CD4-positive, alpha-beta T cell (primary cell): ENCODE measurements at regions of chr12 and their contacts with region 1.

Region 1: DNA sequence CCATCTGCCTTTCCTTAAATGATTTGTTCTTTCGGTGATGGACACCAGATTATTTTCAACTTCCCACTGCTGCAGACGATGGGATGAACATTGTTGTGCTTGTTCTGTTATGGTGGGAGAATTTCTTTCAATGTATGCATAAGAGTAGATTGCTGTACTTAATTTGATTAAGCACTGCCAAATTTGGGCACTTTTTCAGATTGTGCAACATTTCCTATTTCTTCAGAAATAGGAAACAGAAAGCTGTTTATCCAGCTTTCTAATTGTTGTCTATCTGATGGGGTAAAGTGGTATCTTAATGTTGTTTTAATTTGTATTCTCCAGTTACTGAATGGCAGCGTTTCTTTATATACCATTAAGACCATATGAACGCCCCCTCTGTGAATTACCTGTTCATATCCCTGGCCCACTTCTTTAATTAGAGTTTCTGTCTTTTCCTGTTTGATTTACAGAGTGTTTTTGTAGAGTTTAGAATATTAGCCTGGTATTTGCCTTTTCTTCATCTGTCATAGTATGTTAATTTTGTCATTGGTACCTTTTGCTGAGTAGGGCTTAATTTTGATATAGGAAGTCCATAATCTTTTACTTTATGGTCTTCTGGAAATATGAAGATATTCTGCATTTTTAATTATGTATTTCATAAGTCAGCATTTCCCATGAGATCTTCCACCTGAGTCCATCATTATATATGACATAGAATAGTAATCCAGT is 59.6 kb downstream of the DIP2B start:
- DNase-seq: no peak
- ATAC-seq: no peak
- H3K4me3 ChIP-seq: no peak overlapping the region
- H3K4me3 Mint-ChIP-seq: no peak overlapping the region
- H3K27ac ChIP-seq: no peak overlapping the region
- H3K27ac Mint-ChIP-seq: peak overlapping the region; percentile 5
- H3K4me1 ChIP-seq: peaks cover 6% of the 10 kb centered on the region
- H3K4me1 Mint-ChIP-seq: peaks cover 75% of the 10 kb centered on the region
- H3K27me3 ChIP-seq: no peaks in the 10 kb centered on the region
- H3K27me3 Mint-ChIP-seq: no peaks in the 10 kb centered on the region
- CTCF ChIP-seq: no peak

Region 2: DNA sequence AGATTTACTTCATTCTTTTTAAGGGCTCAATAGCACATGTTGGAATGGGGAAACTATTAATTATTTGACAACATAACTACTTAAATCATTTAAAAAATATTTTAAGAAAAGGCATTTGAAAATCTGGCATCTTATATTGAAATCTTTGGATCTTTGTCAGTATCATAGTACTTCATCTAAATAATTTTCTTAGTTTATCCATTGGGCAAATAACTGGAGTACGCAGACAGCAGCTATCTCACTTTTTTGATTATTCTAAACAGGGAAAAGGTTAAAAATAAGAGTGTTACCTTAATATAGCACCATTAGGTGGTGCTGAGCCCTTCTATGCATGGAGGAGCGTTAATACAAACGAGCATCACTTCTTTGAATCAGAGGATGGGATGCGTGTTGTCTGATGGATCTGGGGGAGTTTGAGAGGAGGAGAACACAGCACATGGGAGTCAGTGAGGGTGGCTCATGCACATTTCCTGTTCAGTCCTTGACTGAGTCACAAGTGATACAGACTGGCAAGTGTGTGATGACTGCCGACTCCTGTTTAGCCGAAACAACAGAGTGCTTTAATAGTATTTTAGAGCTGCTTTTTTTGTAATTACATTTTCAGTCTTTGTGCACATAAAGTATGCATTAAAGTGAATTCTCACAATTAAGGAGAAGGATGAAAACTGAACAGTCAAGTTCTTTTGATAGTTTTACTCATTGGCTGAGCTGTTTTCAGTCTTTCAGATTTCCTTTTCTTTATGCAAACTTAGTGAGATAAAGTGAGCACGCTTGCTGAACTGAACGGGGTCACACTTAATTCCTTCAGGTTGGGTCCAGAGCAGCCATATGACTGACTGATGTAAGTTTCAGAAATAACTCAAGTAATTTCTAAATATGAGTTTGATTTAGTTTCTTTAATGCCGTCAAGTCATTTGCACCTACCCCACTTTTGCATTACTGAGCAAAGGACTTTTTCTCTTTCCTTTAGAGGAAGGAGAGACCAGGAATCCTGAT is 33.1 kb after region 1 on chr12:
- CTCF ChIA-PET with region 1: no interaction called
- POLR2A ChIA-PET with region 1: no interaction called
- intact Hi-C with region 1: loop called in 1 of 2 experiments (anchors 5 kb)
- DNase-seq: peak in 13 of 14 experiments; percentile 16 to 70 (median 32)
- ATAC-seq: peak; percentile 98
- H3K4me3 ChIP-seq: no peak overlapping the region
- H3K4me3 Mint-ChIP-seq: peak overlapping the region; percentile 12
- H3K27ac ChIP-seq: no peak overlapping the region
- H3K27ac Mint-ChIP-seq: peak overlapping the region; percentile 28
- H3K4me1 ChIP-seq: peaks cover 7% of the 10 kb centered on the region
- H3K4me1 Mint-ChIP-seq: peaks cover 57% of the 10 kb centered on the region
- H3K27me3 ChIP-seq: no peaks in the 10 kb centered on the region
- H3K27me3 Mint-ChIP-seq: no peaks in the 10 kb centered on the region
- CTCF ChIP-seq: no peak

Region 3: GRCh38 chr12:51970904-51971646 is 1406.7 kb after region 1 on chr12:
- CTCF ChIA-PET with region 1: no interaction called
- POLR2A ChIA-PET with region 1: no interaction called
- intact Hi-C with region 1: no loop called
- DNase-seq: peak in 7 of 14 experiments; percentile 2 to 70 (median 33)
- ATAC-seq: peak; percentile 71
- H3K4me3 ChIP-seq: no peak overlapping the region
- H3K4me3 Mint-ChIP-seq: peak overlapping the region; percentile 72
- H3K27ac ChIP-seq: no peak overlapping the region
- H3K27ac Mint-ChIP-seq: peak overlapping the region; percentile 67
- H3K4me1 ChIP-seq: peaks cover 57% of the 10 kb centered on the region
- H3K4me1 Mint-ChIP-seq: peaks cover 72% of the 10 kb centered on the region
- H3K27me3 ChIP-seq: no peaks in the 10 kb centered on the region
- H3K27me3 Mint-ChIP-seq: no peaks in the 10 kb centered on the region
- CTCF ChIP-seq: peak; percentile 67